Breast epithelium (tissue), 4 donors: ENCODE measurements at regions of chr10 and their contacts with region 1.

Region 1: DNA sequence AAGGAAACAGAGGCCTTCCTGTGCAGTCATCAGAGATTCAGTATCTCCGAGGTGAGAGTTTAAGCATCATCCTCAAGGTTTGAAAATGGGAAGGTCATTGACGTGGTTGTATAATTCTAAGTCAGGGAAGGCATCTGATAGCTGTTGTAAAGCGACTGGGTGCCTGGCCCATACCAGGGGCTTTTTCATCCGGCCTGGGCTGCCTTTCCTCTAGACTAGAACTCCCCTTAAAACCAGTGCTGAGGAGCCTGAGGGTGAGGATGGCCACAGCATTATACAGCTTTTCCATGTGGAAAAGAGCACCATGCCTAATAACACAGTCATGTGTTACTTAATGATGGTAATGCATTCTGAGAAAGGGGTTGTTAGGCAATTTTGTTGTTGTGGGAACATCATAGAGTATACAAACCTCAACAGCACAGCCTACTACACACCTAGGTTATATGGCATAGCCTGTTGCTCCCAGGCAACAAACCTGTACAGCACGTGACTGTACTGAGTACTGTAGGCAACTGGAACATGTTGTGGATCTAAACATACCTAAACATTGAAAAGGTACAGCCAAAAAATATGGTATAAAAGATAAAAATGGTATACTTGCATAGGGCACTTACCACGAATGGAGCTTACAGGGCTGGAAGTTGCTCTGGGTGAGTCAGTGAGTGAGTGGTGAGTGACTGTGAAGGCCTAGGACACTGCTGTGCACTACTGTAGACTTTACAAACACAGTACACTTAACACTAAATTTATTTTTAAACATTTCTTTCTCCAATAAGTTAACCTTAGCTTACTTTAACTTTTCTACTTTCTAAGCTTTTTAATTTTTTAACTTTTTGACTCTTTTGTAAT is 13.5 kb upstream of the CACUL1 start:
- DNase-seq: no peak
- H3K4me3 ChIP-seq: no peak overlapping the region
- H3K27ac ChIP-seq: peak overlapping the region; percentile 52 to 76
- H3K4me1 ChIP-seq: no peaks in the 10 kb centered on the region
- H3K27me3 ChIP-seq: no peaks in the 10 kb centered on the region
- CTCF ChIP-seq: no peak
- POLR2A ChIP-seq: no peak

Region 2: DNA sequence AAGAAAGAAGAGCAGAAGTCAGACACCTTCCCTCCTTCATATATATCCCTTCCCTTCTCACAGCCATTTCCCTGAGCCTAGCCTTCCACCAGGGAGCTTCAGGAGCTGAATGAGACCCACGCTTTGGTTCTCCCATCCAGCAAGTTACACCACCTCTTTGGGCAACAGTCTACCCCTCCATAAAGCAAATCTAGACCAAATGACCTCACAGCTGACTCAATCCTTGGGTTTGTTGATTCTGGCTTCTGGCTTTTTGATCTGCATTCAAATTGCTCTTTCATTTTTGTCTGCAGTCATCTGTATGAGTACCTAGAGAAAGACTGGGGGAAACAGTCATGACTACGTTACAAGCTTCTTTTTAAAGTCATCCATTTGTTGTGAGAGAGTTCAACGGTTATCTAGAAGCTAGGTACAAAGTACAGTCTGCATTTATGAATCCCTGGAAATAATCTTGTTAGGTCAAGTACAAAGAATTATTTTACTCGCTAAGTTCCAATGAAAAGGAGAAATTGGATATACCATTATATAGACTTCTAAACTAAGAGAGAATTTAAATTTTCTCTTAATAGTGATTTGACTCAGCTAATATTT is 807.9 kb before region 1 on chr10:
- intact Hi-C with region 1: no loop called
- DNase-seq: no peak
- H3K4me3 ChIP-seq: no peak overlapping the region
- H3K27ac ChIP-seq: no peak overlapping the region
- H3K4me1 ChIP-seq: no peaks in the 10 kb centered on the region
- H3K27me3 ChIP-seq: no peaks in the 10 kb centered on the region
- CTCF ChIP-seq: no peak
- POLR2A ChIP-seq: no peak

Region 3: DNA sequence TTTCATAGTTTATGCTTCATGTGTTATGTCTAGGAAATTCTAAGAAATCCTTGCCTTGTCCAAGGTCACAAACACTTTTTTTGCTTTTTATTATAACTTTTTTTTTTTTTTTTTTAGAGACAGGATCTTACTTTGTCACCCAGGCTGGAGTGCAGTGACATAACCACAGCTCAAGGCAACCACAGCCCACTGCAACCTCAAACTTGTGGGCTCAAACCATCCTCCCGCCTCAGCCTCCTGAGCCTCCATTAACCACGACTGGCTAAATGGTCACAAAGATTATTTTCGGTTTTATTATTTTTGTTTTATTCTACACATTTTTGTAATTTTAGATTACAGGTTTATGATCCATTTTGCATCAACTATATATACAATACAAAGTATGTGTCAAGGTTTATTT is 419.1 kb before region 1 on chr10:
- intact Hi-C with region 1: loop called (anchors 5 kb)
- DNase-seq: no peak
- H3K4me3 ChIP-seq: no peak overlapping the region
- H3K27ac ChIP-seq: no peak overlapping the region
- H3K4me1 ChIP-seq: no peaks in the 10 kb centered on the region
- H3K27me3 ChIP-seq: no peaks in the 10 kb centered on the region
- CTCF ChIP-seq: no peak
- POLR2A ChIP-seq: no peak